HEK293 (cell line): ENCODE measurements at regions of chr1 and their contacts with region 1.

Region 1: GRCh38 chr1:19240673-19241538 is 10.4 kb downstream of the EMC1 start:
- H3K4me3 ChIP-seq: no peak overlapping the region
- H3K27ac ChIP-seq: no peak overlapping the region
- H3K4me1 ChIP-seq: no peaks in the 10 kb centered on the region
- CTCF ChIP-seq: peak; percentile 78

Region 2: GRCh38 chr1:19179597-19180264 is 61.2 kb before region 1 on chr1:
- CTCF ChIA-PET with region 1: interaction called, 14 read pairs
- POLR2A ChIA-PET with region 1: no interaction called
- H3K4me3 ChIP-seq: no peak overlapping the region
- H3K27ac ChIP-seq: no peak overlapping the region
- H3K4me1 ChIP-seq: no peaks in the 10 kb centered on the region
- CTCF ChIP-seq: no peak

Region 3: DNA sequence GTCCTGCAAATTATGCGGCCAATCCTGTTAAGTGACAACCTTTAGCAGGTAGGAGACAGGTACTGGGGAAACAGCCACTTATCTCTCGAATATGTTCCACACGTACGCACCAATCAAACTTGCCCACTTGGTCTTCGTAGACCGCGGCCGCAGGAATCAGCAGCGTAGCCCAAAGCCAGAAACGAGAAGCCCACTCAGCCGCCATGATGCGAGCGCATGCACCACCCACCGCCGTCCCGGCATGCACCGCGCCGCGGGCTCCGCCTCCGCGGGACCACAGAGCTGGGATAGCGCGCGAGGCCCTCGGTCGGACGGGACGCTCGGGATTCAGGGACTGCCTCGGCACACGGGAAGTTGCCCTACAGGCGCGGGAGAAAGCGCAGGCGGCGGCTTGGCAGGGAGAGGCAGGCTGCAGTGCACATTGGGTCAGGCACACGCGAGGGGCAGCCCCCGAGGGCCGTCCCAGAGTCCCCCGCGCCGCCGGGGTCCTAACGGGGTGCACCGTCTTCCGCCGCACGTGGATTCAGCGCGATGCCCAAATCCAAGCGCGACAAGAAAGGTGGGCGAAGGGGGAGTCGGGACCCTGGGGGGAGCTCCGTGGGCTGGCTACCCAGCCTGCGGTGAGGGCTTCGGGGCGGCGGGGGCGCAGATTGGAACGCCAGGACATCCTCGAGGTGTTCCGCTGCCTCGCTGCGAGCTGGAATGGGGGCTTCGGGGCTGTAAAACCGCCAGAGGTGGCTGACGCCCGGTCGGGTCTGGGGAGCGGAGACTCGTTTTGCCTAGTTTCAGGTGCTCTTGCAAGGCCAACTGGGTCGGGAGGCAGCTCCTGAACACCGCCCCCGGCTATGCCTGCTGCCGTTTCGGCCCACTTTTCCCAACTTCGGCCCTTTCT is 10.6 kb after region 1 on chr1 and contains the starts of genes EMC1 and MRTO4:
- CTCF ChIA-PET with region 1: interaction called, 12 read pairs
- POLR2A ChIA-PET with region 1: interaction called, 11 read pairs
- H3K4me3 ChIP-seq: peak within 1 kb of the TSS; percentile 96
- H3K27ac ChIP-seq: peak within 1 kb of the TSS; percentile 98
- H3K4me1 ChIP-seq: no peaks in the 10 kb centered on the region
- CTCF ChIP-seq: no peak